GM18951 (cell line): ENCODE measurements at regions of chr9 and their contacts with region 1.

Region 1: DNA sequence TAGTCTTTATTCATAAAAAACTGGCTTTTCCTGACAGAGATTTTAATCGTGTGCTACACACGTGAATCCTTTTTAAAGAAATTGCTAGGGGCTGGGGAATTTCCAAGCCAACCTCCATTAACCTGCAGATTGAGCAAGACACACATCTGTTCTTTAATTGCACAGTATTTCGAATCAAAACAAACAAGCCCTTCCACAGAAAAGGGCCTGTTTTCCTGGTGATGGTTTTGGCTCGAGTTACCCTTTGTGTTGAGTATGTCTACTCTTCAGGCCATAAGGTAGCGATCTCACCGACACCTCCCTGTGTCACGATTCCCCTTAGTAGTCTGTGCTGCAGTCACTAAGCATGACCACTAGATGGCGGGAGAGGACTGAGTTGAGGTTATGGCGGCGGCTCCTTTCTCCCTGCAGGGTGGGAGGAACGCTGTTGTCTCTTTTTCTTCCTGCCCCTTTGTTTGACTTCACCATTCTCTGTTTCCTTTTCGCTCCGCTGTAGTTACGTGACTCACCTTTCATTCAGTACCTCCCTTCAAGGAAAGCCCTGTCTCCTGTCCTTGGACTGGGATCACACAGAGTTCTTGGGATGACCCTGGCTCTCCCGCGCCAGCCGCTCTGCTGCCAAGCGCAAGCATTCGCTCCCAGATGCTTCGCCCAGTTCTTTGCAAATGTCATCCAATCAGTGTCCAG is 137.1 kb upstream of the SLC24A2 start:
- POLR2A ChIP-seq: no peak

Region 2: DNA sequence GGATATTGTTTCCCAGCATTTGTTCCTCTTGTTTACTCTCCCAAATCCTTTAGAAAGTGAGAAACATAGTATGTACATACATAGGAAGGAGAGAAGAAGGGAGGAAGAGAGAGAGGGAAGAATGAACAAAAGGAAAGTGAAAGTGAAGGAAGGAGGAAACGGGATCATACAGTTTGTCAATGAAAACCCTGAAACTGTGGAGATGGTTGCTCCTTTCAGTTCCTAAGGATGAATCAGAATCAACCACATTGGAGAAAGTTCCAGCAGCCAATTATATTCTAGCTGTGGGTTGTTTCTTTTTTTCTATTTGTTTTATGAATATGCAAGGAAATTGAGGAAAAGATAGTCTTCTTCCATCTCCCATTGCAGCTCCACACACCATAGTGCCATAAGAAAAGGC is 299.9 kb after region 1 on chr9:
- in situ Hi-C with region 1: no loop called
- POLR2A ChIP-seq: no peak

Region 3: GRCh38 chr9:20331095-20331685 is 405.2 kb after region 1 on chr9:
- in situ Hi-C with region 1: loop called (anchors 25 kb)
- POLR2A ChIP-seq: no peak

Region 4: DNA sequence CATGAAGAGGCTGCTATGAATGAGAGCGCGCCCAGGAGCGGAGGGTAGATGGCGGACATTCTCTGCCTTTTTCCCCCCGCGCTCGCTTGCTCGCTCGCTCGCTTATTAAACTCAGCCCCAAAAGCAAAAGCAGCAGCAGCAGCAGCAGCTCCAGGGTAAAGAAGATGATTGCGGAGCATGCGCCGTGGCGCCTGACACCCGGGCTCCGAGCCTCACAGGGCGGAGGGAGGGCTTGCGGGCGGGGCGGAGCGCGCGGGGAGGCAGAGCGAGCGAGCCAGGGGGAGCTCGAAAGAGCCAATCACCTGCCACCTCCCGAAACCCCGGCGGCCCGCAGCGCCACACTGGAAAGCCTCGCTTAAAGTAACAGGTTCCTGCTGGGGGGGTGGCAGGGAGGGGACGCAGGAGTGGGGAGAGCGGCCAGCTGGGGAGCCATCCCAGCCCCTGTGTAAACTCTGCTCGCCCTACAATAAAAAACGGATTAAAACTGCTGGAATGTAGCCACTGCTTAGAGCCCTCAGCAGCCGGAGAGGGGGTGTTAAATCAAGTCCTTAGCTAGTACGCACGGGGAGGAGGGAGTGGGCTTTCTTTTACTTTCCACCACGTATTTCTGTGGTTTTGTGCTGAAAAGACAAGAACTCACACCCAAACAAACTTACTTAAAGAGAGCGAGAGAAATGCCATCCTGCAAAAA is 696.5 kb after region 1 on chr9 and contains the start of gene MLLT3:
- in situ Hi-C with region 1: loop called (anchors 25 kb)
- POLR2A ChIP-seq: peak; percentile 81

Region 5: DNA sequence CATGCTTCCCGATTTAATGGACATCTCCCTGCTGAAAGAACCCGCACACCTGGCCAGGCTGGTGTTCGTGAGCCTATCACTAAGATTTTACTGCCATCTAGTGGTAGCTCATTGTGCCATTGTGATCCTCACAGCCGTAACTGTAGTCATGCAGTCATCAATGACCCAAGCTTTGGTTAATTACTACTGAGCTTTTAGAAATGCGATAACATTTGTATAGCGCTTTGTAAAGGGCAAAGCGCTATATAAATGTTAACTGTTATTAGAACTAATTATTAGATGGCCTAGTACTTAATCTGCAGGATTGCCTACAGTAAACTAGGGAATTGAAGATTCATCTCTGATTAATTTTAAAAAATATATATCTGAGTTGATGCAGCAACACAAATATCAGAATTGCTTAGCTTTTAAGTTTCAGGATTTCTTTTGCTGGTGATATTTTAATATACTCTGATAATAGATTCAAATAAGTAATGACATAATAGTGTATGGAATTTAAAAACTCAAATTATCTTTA is 1015.3 kb after region 1 on chr9:
- in situ Hi-C with region 1: loop called (anchors 10 kb)
- POLR2A ChIP-seq: no peak

Region 6: GRCh38 chr9:21110708-21111576 is 1185.0 kb after region 1 on chr9:
- in situ Hi-C with region 1: loop called (anchors 10 kb)
- POLR2A ChIP-seq: no peak